H1 (cell line): ENCODE measurements at regions of chr12 and their contacts with region 1.

Region 1: DNA sequence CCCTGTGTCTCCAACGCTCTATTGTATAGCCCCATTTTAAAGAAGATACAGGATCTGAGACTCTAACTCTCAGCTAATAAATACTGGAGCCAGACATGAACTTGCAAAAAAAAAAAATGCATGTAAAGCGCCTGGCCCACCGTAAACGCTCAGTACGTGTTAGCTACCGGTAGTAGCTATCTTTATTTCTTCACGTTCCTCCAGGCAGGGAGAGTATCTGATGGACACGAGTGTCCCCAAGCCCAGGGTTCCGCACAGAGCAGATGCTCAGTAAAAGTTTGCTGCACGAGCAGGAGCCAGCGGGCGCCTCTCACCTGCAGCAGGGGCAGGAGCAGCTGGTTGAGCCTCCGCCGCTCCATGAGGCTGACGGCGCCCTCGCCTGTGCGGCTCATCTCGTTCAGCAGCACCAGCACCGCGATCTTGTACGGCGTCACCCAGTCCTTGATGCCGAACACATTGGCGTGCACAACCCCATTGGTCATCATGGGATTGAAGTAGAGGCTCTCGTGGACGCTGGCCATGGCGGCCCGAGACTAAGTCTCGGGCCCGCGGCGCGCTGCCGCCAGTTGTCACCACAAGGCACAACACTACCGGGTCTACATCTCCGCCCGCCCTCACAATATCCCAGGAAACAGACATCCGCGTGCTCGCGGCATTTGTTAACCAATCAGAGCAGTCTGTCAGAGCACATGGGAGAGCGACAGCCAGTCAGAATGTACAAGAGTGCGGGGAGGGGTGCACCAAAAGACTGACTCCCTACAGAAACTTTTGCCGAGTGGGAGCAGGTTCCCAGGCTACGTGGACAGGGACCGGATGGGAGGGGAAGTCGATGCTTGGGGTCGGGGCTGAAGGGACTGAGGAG is at the start of gene ANAPC5:
- DNase-seq: peak; percentile 86
- H3K4me3 ChIP-seq: peak within 1 kb of the TSS; percentile 94 to 97 (median 96)
- H3K27ac ChIP-seq: peak within 1 kb of the TSS; percentile 72
- H3K4me1 ChIP-seq: 0 out of 7 replicates have a peak, but pooled peaks cover 0 to 2% (median 0%) of the 10 kb centered on the region in 4 experiments
- H3K27me3 ChIP-seq: no peaks in the 10 kb centered on the region
- CTCF ChIP-seq: no peak
- EP300 ChIP-seq: no peak
- POLR2A ChIP-seq: peak; percentile 53 to 88
- RAD21 ChIP-seq: no peak
- total RNA-seq, gene ANAPC5: 97.6 and 103 TPM in 2 replicates

Region 2: GRCh38 chr12:121334513-121335343 is 17.3 kb before region 1 on chr12:
- CTCF ChIA-PET with region 1: interaction called, 11 read pairs
- POLR2A ChIA-PET with region 1: interaction called, 10 read pairs
- DNase-seq: no peak
- H3K4me3 ChIP-seq: no peak overlapping the region
- H3K27ac ChIP-seq: no peak overlapping the region
- H3K4me1 ChIP-seq: 0 out of 7 replicates have a peak, but pooled peaks cover 0 to 3% (median 0%) of the 10 kb centered on the region in 4 experiments
- H3K27me3 ChIP-seq: no peaks in the 10 kb centered on the region
- CTCF ChIP-seq: peak in 2 of 3 experiments; percentile 57 to 87; a peak in 3 of 4 replicates
- EP300 ChIP-seq: no peak
- POLR2A ChIP-seq: no peak
- RAD21 ChIP-seq: peak; percentile 50 to 63

Region 3: DNA sequence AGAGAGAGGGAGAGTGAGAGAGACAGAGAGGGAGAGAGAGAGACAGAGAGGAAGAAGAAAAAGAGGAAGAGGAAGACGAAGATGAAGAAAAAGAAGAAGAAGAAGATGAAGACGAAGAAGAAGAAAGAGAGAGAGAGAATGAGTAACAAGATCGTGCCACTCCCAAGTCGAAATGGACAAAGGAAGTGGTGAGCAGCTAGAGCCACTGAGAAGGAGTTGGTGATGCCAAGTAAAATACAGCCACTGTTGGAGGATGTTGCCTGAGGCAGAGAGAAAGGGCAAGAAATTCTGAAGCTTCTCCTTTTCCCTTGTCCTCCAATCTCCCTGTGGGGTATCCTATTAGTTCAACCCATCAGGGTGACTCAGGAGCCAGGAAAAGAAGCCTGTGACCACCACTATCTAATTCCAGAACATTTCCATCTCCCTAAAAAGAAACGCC is 12.7 kb after region 1 on chr12:
- CTCF ChIA-PET with region 1: no interaction called
- POLR2A ChIA-PET with region 1: interaction called, 13 read pairs
- DNase-seq: no peak
- H3K4me3 ChIP-seq: no peak overlapping the region
- H3K27ac ChIP-seq: no peak overlapping the region
- H3K4me1 ChIP-seq: no peaks in the 10 kb centered on the region
- H3K27me3 ChIP-seq: no peaks in the 10 kb centered on the region
- CTCF ChIP-seq: no peak
- EP300 ChIP-seq: no peak
- POLR2A ChIP-seq: no peak
- RAD21 ChIP-seq: no peak

Region 4: DNA sequence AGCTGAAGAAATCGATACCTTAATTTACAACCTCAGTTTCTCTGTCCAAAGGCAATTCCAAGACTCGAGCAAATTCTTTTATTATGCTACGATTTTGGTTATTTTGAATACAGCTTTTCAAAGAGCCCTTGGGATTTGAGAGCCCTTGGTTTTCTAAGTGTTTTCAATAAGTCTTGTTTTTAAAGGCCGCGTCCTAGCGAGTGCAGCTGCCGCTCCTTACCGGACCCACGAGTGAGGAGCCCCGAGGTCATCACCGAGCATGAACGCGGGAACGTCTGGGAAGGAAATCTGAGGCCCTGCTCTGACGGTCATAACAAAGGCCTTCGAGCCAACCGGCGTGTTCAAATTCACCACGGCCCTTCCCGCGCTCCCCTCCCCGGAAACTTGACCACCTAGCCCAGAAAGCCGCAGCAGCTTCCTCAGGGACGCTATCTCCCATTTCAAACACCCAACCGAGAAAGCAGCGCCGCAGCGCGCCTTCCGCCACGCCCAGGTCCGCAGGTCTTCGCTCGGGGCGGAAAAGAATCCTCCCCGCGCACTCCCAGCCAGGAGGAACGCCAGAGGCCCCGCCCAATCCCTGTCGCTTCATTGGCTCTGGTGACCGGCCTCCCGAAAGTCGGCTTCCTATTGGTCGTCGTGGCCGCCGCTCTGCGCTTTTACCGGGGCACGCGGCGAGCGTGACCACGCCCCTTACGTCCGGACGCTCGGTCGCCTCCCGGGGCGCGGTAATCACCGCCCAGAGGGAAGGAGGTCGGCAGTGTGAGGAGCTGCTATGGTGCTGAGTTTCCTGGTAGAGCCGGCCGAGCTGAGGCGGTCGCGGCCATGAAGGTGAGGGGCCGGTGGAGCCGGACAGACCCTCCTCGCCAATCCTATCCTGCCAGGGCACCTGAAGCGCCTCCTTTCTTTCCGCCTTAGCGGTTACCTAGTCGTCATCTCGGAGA is 47.6 kb after region 1 on chr12 and contains the start of gene RNF34:
- CTCF ChIA-PET with region 1: no interaction called
- POLR2A ChIA-PET with region 1: interaction called, 11 read pairs
- DNase-seq: peak; percentile 94 to 98
- H3K4me3 ChIP-seq: peak within 1 kb of the TSS; percentile 76 to 87 (median 86)
- H3K27ac ChIP-seq: peak within 1 kb of the TSS; percentile 83
- H3K4me1 ChIP-seq: peaks cover 0 to 4% (median under 1%) of the 10 kb centered on the region in 4 experiments; a peak in 1 of 7 replicates
- H3K27me3 ChIP-seq: no peaks in the 10 kb centered on the region
- CTCF ChIP-seq: no peak
- EP300 ChIP-seq: no peak
- POLR2A ChIP-seq: peak; percentile 87 to 92; a peak in 2 of 3 replicates
- RAD21 ChIP-seq: no peak
- total RNA-seq, gene RNF34: 56.2 and 57.6 TPM in 2 replicates